Psoas muscle (tissue), 8 donors: ENCODE measurements at regions of chr20 and their contacts with region 1.

Region 1: DNA sequence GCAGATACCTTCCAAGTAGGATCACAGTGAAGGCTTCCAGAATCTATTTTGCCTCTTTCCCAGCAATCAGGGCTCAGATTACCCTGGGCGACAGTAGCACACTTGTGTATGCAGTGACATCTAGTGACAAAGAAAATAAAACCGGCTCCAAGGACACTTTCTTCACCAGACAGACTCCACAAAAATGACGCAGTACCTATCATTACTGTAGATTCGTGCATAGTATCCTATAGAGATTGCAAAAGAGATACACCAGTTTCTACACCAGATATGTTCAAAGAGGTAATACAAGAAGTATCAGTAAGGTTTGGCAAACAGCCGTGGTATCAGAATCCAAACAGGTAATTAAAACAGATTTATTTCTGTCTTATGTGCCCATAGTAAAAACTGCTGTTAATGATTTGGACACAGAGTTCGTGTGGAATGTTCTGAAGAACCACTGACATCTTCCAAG is 600.4 kb upstream of the JAG1 start:
- DNase-seq: no peak
- ATAC-seq: peak; percentile 83 to 97 (median 90)
- H3K4me3 ChIP-seq: no peak overlapping the region
- H3K27ac ChIP-seq: no peak overlapping the region
- H3K4me1 ChIP-seq: peaks cover 5% of the 10 kb centered on the region
- H3K27me3 ChIP-seq: no peaks in the 10 kb centered on the region
- CTCF ChIP-seq: peak; percentile 74

Region 2: DNA sequence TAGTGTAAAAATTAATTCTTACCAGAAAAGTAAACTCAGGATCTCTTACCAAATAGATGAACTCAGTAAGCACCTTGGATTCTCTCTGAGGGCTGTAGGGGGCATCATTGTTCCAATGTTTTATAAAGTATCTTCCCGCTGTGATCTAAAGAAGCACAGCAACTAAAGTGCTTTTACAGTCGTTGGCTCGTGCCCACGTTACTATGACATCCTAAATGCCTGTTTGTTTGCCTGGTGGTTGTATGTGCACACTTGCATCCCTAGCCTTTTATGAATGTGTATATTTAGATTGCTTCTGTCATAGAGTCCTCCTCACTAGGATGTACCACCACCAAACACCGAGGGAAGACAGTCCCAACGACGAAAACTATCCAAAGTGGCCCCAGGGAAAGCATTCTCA is 804.6 kb before region 1 on chr20:
- intact Hi-C with region 1: loop called (anchors 5 to 10 kb)
- DNase-seq: peak in 1 of 2 donors; percentile 27
- ATAC-seq: peak; percentile 55 to 80 (median 70)
- H3K4me3 ChIP-seq: no peak overlapping the region
- H3K27ac ChIP-seq: no peak overlapping the region
- H3K4me1 ChIP-seq: peaks cover 3% of the 10 kb centered on the region
- H3K27me3 ChIP-seq: no peaks in the 10 kb centered on the region
- CTCF ChIP-seq: peak; percentile 59

Region 3: GRCh38 chr20:10558635-10559187 is 715.5 kb before region 1 on chr20:
- intact Hi-C with region 1: loop called in 1 of 2 experiments (anchors 5 kb)
- DNase-seq: no peak
- ATAC-seq: no peak
- H3K4me3 ChIP-seq: no peak overlapping the region
- H3K27ac ChIP-seq: no peak overlapping the region
- H3K4me1 ChIP-seq: no peaks in the 10 kb centered on the region
- H3K27me3 ChIP-seq: no peaks in the 10 kb centered on the region
- CTCF ChIP-seq: no peak

Region 4: DNA sequence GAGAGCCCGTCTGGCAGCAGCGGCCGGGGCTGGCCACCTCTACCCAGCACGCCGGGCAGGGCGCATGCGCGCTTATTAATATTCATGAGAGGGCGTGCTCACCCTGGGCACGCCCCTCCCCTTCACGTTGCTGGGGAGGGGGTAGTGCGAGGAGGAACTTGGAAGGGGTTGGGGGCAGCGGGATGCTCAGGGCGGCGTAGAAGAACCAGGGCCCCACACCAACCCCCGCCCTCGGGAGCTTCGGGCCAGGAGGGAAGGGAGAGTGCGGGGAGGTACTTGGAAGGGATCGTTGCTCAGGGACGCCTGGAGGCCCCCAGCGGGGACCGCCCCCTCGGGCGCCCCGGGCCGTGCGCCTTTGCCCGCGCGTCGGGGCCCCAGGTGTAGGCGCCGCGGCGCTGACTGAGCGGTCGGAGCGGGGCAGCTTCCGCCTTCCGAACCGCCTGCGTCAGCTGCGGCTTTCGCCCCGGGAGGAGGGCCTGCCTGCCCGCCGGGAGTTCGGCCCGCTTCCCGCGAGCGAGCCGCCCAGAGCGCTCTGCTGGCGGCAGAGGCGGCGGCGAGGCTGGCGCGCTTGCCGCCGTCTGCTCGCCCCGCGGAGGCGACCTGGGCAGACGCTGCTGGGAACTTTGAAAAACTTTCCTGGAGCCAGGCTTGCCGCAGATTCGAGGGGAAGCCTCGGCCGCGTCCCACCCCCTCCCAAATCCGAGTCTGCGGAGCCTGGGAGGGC is 600.0 kb before region 1 on chr20 and contains the start of gene JAG1:
- intact Hi-C with region 1: loop called (anchors 5 kb)
- DNase-seq: peak; percentile 94 to 97
- ATAC-seq: peak; percentile 87 to 90 (median 90)
- H3K4me3 ChIP-seq: peak within 1 kb of the TSS; percentile 97
- H3K27ac ChIP-seq: peak within 1 kb of the TSS; percentile 92
- H3K4me1 ChIP-seq: peaks cover under 1% of the 10 kb centered on the region
- H3K27me3 ChIP-seq: no peaks in the 10 kb centered on the region
- CTCF ChIP-seq: no peak
- total RNA-seq, gene JAG1: 10.4 to 35.4 (median 16.0) TPM

Region 5: DNA sequence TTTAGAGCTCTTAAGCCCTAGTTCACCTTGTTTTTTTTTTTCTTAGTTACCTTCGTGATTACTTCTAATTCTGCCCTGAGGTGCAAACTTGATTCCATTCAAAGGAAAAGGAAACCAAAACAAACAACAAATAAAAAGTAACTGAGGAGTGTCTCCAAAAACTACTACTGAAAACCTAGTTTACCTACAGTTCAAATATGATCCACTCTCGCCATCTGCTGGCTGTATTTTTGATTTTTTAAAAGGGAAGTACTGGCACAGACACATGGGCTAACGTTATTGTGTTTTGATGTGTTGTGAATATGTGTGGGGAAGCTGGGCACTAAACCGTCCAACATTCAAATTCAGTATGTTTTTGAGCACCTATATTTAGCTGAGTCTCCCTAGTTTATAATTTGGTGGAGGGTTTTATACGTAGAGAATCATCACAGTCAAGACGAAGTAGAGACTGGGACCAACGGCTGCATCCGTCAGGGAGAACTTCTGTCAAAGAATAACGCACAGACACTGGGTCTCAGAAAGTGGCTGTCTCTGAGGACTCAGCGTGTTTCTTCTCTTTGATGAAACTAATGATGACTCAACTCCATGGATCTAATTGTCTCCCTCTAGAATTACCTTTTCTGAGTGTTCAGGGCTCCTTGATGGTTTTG is 270.0 kb after region 1 on chr20:
- intact Hi-C with region 1: loop called in 1 of 2 experiments (anchors 5 kb)
- DNase-seq: no peak
- ATAC-seq: peak; percentile 58 to 80 (median 62)
- H3K4me3 ChIP-seq: no peak overlapping the region
- H3K27ac ChIP-seq: no peak overlapping the region
- H3K4me1 ChIP-seq: no peaks in the 10 kb centered on the region
- H3K27me3 ChIP-seq: no peaks in the 10 kb centered on the region
- CTCF ChIP-seq: peak; percentile 70